PC-9 (cell line): ENCODE measurements at regions of chr9 and their contacts with region 1.

Region 1: GRCh38 chr9:131747356-131747755 is 7.5 kb upstream of the RAPGEF1 start:
- DNase-seq: peak in 1 of 2 experiments; percentile 61
- H3K4me3 ChIP-seq: no peak overlapping the region
- H3K27ac ChIP-seq: no peak overlapping the region
- H3K4me1 ChIP-seq: peaks cover 23% of the 10 kb centered on the region
- H3K27me3 ChIP-seq: no peaks in the 10 kb centered on the region
- CTCF ChIP-seq: peak; percentile 64

Region 2: DNA sequence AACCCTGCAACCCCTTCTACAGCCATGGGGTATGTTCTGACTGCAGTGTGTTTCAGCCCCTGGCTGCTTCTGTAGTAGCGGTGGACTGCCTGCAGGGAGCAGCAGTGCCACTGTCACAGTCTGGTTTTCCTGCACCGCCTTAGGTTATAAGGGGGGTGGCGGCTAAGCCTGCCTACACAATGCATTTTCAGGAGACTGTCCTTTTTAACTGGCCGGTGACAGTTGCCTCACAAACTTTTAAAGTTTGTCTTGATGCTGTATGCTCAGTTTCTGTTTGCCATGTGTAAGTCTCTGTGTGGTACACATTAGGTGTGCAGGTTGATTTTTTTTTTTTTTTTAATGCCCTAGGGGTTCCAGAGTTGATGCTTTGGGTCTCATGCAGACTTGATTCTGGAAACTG is 569.0 kb before region 1 on chr9:
- CTCF ChIA-PET with region 1: no interaction called
- POLR2A ChIA-PET with region 1: no interaction called
- intact Hi-C with region 1: loop called (anchors 5 kb)
- DNase-seq: peak; percentile 37 to 63
- H3K4me3 ChIP-seq: no peak overlapping the region
- H3K27ac ChIP-seq: no peak overlapping the region
- H3K4me1 ChIP-seq: no peaks in the 10 kb centered on the region
- H3K27me3 ChIP-seq: no peaks in the 10 kb centered on the region
- CTCF ChIP-seq: peak; percentile 88

Region 3: DNA sequence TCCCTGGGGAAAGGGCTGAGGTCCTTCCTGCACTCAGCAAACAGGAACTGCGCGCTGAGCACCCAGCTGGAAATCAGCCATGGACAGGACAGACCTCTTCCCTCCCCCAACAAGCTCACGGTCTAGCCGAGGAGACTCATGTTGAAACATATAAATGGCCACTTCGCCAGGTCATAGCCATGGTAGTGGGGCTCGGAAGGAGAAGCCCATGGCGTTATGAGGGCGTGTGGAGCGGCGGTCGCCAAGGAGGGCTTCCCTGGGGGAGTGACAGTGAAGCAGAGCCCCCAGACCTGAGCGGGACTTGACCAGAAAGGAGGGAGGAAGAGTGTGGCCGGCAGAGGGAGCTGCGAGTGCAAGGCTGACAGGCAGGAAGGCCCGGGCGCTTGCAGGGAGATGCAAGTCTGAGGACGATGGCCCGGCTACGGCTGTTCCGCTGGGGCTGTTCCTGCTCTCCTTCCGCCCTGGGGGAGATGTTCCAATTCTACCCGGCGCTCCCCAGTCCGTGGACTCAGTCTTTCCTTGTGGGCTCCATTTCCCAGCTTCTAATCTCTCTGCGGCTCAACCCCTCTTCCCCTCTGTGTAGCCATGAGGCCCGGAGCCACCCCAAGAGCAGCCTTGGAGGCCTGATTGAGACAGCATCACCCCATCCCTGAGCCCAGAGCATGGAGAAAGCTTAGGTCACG is 397.3 kb before region 1 on chr9:
- CTCF ChIA-PET with region 1: no interaction called
- POLR2A ChIA-PET with region 1: no interaction called
- intact Hi-C with region 1: loop called (anchors 5 kb)
- DNase-seq: peak; percentile 58 to 88
- H3K4me3 ChIP-seq: peak overlapping the region; percentile 41; the same call in 1 of the 2 replicates
- H3K27ac ChIP-seq: no peak overlapping the region
- H3K4me1 ChIP-seq: no peaks in the 10 kb centered on the region
- H3K27me3 ChIP-seq: no peaks in the 10 kb centered on the region
- CTCF ChIP-seq: peak; percentile 79

Region 4: DNA sequence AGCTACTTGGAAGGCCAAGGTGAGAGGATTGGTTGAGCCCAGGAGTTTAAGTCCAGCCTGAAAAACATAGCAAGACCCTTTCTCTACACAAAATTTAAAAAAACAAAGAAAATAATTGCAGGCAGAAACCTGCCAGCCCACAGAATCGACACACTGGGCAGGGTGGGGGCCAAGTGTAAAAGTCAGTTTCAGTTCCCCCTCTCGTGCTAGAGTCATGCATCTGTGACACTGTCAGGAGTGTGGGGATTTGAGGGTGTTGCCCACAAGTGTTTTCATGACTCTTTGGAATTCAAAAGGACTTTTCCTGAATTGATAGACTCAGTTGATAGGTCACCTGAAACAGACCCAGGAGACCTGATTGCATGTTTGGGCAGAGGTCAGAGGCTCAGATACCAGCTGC is 305.9 kb before region 1 on chr9:
- CTCF ChIA-PET with region 1: no interaction called
- POLR2A ChIA-PET with region 1: no interaction called
- intact Hi-C with region 1: no loop called
- DNase-seq: no peak
- H3K4me3 ChIP-seq: no peak overlapping the region
- H3K27ac ChIP-seq: no peak overlapping the region
- H3K4me1 ChIP-seq: no peaks in the 10 kb centered on the region
- H3K27me3 ChIP-seq: no peaks in the 10 kb centered on the region
- CTCF ChIP-seq: no peak

Region 5: GRCh38 chr9:131629825-131630204 is 117.5 kb before region 1 on chr9:
- CTCF ChIA-PET with region 1: no interaction called
- POLR2A ChIA-PET with region 1: interaction called, 23 read pairs
- intact Hi-C with region 1: no loop called
- DNase-seq: no peak
- H3K4me3 ChIP-seq: no peak overlapping the region
- H3K27ac ChIP-seq: no peak overlapping the region
- H3K4me1 ChIP-seq: peaks cover 23% of the 10 kb centered on the region
- H3K27me3 ChIP-seq: no peaks in the 10 kb centered on the region
- CTCF ChIP-seq: no peak

Region 6: DNA sequence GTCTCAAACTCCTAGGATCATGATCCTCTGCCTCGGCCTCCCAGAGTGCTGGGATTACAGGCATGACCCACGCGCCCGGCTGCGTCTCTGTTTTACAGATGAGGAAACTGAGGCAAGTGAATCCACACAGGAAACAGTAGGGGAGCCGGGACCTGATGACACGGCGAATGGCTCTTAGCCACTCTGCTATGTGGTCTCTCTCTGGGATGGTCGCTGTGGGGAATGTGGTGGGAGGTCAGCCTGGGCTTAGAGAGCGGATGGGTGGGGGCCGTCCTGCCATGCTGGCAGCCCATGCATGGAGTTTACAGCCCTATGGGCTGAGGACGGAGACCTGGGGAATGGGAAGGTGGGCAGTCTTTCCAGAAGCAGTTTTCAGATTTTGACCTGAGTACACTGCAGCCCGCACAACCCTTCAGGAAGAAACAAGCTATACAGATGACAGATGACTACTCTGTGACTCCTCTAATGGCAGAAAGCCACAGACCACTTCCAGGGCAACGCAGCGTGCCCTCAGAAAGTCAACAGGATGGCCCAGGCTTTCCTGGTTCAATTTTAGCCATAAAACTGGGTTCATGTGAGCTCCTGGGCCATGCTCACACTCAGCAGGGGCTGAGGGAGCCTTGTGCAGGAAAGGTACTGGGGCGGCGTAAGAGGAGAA is 128.6 kb after region 1 on chr9:
- CTCF ChIA-PET with region 1: no interaction called
- POLR2A ChIA-PET with region 1: no interaction called
- intact Hi-C with region 1: no loop called
- DNase-seq: no peak
- H3K4me3 ChIP-seq: no peak overlapping the region
- H3K27ac ChIP-seq: no peak overlapping the region
- H3K4me1 ChIP-seq: no peaks in the 10 kb centered on the region
- H3K27me3 ChIP-seq: no peaks in the 10 kb centered on the region
- CTCF ChIP-seq: no peak